Activated CD8-positive, alpha-beta T cell treated with anti-CD3 and anti-CD28 coated beads for 36 hours (primary cell): ENCODE measurements at regions of chr16 and their contacts with region 1.

Region 1: DNA sequence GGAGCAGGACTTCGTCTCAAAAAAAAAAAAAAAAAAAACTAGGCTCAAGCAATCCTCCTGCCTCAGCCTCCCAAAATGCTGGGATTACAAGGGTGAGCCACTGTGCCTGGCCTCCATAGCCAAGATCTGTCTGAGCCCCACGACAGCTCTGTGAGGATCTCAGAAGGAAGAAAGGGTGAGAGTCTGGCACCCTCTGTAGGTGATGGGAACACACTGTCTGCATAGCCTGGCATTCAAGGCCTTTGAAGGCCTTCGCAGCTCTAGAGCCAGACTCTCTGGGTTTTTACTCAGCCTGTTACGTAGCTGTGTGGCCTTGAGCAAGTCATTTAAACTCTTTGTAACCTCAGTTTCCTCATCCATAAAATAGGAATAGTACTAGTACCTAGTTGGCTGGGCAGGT is 6.3 kb upstream of the XPO6 start:
- DNase-seq: peak; percentile 75
- ATAC-seq: peak; percentile 100
- H3K4me3 Mint-ChIP-seq: no peak overlapping the region
- H3K27ac Mint-ChIP-seq: no peak overlapping the region
- H3K4me1 Mint-ChIP-seq: peaks cover 3% of the 10 kb centered on the region
- H3K27me3 Mint-ChIP-seq: no peaks in the 10 kb centered on the region
- CTCF ChIP-seq: peak; percentile 71

Region 2: DNA sequence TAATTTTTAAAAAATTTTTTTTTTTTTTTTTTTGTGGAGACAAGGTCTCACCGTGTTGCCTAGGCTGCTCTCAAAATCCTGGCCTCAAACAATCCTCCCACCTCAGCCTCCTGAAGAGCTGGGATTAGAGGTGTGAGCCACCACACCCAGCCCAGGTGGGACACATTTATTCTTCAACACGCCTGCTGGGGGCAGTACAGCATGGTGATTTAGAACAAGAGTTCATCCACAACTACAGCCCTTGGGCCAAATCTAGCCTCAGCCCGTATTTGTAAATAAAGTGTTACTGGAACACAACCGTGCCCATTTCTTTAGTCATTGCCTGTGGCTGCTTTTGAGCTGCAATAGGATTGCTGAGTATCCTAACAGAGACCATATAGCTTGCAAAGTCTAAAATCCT is 575.3 kb before region 1 on chr16:
- CTCF ChIA-PET with region 1: no interaction called
- POLR2A ChIA-PET with region 1: no interaction called
- intact Hi-C with region 1: no loop called
- DNase-seq: peak; percentile 15
- ATAC-seq: no peak
- H3K4me3 Mint-ChIP-seq: no peak overlapping the region
- H3K27ac Mint-ChIP-seq: no peak overlapping the region
- H3K4me1 Mint-ChIP-seq: no peaks in the 10 kb centered on the region
- H3K27me3 Mint-ChIP-seq: no peaks in the 10 kb centered on the region
- CTCF ChIP-seq: peak; percentile 36

Region 3: DNA sequence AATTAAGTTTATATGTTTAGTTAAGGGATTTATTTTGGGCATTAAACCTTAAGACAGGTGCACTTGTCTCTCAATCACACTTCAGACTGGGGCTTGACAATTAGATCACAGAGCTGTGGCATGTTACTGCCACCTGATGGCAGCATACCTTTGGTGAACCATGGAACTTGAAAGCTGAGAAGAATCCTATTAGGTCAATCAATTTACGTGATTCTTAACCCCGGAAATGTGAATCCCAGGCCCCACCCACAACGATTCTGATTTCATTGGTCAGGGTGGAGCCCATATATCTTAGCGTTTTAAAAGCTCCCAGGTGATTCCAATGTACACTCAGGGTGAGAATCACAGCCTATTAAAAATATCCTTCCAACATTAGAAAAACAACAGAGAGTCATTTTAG is 245.6 kb before region 1 on chr16:
- CTCF ChIA-PET with region 1: interaction called, 21 read pairs
- POLR2A ChIA-PET with region 1: no interaction called
- intact Hi-C with region 1: no loop called
- DNase-seq: peak; percentile 76
- ATAC-seq: peak; percentile 88
- H3K4me3 Mint-ChIP-seq: no peak overlapping the region
- H3K27ac Mint-ChIP-seq: no peak overlapping the region
- H3K4me1 Mint-ChIP-seq: peaks cover 1% of the 10 kb centered on the region
- H3K27me3 Mint-ChIP-seq: peaks cover 14% of the 10 kb centered on the region
- CTCF ChIP-seq: peak; percentile 71

Region 4: DNA sequence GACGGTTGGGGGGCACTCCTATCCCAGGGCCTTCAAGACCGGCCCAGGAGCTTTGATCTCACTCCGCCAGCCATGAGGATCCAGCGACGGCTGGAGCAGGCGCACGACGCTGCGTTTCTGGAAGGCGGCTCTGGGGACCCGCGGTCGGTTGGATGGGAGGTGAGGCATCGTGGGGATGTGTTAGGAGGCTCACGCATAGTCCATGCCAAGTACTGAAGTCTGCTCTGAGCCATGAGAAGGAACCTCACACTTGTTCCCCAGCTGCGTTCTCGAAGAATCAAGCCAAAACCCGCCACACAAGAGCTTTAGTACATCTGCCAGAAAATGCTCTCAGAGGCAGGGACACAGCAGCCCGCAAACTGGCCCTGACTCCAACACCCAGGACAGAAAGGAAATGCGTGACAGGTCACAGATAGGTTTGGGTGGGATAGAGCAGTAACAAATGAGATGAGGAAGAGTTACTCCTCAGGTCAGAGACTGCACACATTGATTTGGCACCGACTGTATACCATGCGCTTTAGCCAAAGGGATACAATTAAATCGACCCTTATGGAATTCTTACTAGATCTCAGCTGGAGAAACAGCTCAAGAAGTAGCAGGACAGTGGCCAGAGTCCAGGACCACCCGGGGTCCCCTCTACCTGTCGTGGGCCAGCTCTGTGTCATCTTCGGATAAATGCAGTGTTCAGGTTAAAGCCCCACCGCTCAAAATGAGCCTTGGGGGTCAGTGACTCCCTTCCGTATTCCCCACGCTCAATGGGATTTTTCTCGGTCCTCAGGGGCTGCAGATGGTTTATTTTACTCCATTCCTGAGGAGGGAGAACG is 147.9 kb before region 1 on chr16:
- CTCF ChIA-PET with region 1: interaction called, 19 read pairs
- POLR2A ChIA-PET with region 1: no interaction called
- intact Hi-C with region 1: no loop called
- DNase-seq: no peak
- ATAC-seq: no peak
- H3K4me3 Mint-ChIP-seq: no peak overlapping the region
- H3K27ac Mint-ChIP-seq: no peak overlapping the region
- H3K4me1 Mint-ChIP-seq: no peaks in the 10 kb centered on the region
- H3K27me3 Mint-ChIP-seq: peaks cover 7% of the 10 kb centered on the region
- CTCF ChIP-seq: no peak

Region 5: GRCh38 chr16:28130099-28131088 is 87.7 kb before region 1 on chr16:
- CTCF ChIA-PET with region 1: interaction called, 83 read pairs
- POLR2A ChIA-PET with region 1: no interaction called
- intact Hi-C with region 1: no loop called
- DNase-seq: no peak
- ATAC-seq: no peak
- H3K4me3 Mint-ChIP-seq: no peak overlapping the region
- H3K27ac Mint-ChIP-seq: peak overlapping the region; percentile 30
- H3K4me1 Mint-ChIP-seq: peaks cover 11% of the 10 kb centered on the region
- H3K27me3 Mint-ChIP-seq: no peaks in the 10 kb centered on the region
- CTCF ChIP-seq: no peak

Region 6: GRCh38 chr16:28140788-28141618 is 77.1 kb before region 1 on chr16:
- CTCF ChIA-PET with region 1: interaction called, 83 read pairs
- POLR2A ChIA-PET with region 1: interaction called, 3 read pairs
- intact Hi-C with region 1: loop called (anchors 5 kb)
- DNase-seq: peak; percentile 89
- ATAC-seq: peak; percentile 77
- H3K4me3 Mint-ChIP-seq: peak overlapping the region; percentile 61
- H3K27ac Mint-ChIP-seq: peak overlapping the region; percentile 94
- H3K4me1 Mint-ChIP-seq: peaks cover 80% of the 10 kb centered on the region
- H3K27me3 Mint-ChIP-seq: no peaks in the 10 kb centered on the region
- CTCF ChIP-seq: peak; percentile 54

Region 7: GRCh38 chr16:28155293-28155692 is 62.8 kb before region 1 on chr16:
- CTCF ChIA-PET with region 1: interaction called, 16 read pairs
- POLR2A ChIA-PET with region 1: interaction called, 3 read pairs
- intact Hi-C with region 1: no loop called
- DNase-seq: no peak
- ATAC-seq: no peak
- H3K4me3 Mint-ChIP-seq: no peak overlapping the region
- H3K27ac Mint-ChIP-seq: peak overlapping the region; percentile 55
- H3K4me1 Mint-ChIP-seq: peaks cover 63% of the 10 kb centered on the region
- H3K27me3 Mint-ChIP-seq: no peaks in the 10 kb centered on the region
- CTCF ChIP-seq: no peak

Region 8: DNA sequence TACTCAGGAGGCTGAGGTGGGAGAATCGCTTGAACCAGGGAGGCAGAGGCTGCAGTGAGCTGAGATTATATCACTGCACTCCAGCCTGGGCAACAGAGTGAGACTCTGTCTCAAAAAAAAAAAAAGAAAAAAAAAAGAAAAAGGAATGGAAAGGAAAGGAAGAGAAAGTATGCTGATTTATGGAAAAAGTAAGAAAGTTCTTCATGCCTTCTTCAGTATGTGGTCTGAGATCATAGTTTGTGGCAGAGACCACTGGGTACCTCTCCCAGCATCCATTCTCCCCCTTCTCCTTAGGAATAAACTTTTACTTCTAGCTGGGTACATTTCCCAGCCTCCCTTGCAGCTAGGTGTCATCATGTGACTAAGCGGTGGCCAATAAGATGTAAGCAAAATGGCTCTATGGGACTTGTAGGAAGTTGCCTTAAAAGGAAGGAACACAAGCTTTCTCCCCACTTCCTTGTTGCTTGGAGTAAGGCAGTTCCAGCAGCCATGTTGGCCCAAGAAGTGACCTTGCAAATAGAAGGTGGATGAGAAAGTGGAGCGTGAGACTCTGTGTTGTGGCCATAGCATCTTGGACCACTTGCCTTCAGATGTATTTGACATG is 19.8 kb after region 1 on chr16:
- CTCF ChIA-PET with region 1: interaction called, 10 read pairs
- POLR2A ChIA-PET with region 1: no interaction called
- intact Hi-C with region 1: no loop called
- DNase-seq: peak; percentile 35
- ATAC-seq: no peak
- H3K4me3 Mint-ChIP-seq: no peak overlapping the region
- H3K27ac Mint-ChIP-seq: no peak overlapping the region
- H3K4me1 Mint-ChIP-seq: no peaks in the 10 kb centered on the region
- H3K27me3 Mint-ChIP-seq: no peaks in the 10 kb centered on the region
- CTCF ChIP-seq: no peak

Region 9: GRCh38 chr16:28304214-28304613 is 86.1 kb after region 1 on chr16:
- CTCF ChIA-PET with region 1: no interaction called
- POLR2A ChIA-PET with region 1: no interaction called
- intact Hi-C with region 1: no loop called
- DNase-seq: peak; percentile 38
- ATAC-seq: no peak
- H3K4me3 Mint-ChIP-seq: no peak overlapping the region
- H3K27ac Mint-ChIP-seq: no peak overlapping the region
- H3K4me1 Mint-ChIP-seq: peaks cover 48% of the 10 kb centered on the region
- H3K27me3 Mint-ChIP-seq: no peaks in the 10 kb centered on the region
- CTCF ChIP-seq: no peak